ENCODE measurements at regions of chr17 and their contacts with region 1.

Region 1: DNA sequence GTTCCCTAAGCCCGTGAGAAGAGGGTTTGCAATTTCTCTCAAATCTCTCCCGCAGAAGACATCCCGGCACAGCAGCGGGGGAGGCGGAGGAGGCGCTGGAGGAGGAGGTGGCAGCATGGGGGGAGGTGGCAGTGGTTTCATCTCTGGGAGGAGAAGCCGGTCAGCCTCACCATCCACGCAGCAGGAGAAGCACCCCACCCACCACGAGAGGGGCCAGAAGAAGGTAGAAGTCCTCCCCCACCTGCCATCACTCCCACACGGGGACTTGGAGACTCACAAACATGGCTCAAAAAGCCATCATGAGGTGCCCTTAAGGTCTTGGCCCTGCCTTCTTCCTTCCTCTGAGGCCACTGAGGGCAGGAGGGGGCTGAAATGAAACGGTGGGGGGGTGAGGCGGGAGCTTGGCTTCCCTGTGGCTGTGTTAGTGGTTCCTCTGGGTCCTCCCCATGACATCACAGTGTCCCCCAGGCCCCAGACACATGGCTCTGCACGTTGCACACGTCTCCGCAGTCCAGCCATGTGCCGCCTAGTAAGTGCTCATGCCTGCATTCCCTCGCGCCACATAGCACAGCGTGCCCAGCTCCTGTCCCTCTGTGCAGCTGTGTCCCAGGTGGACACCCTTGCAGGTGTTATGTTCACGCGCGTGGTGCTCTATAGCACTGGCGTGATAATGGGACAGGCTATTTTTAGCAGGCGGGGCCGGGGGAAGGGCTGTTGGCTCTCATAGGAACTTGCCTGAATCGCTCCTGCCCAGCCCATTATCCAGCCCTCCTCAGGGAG is 6.9 kb downstream of the MLLT6 start:
- DNase-seq: peak in 1 of 4 experiments; percentile 38
- ATAC-seq: no peak
- H3K4me3 ChIP-seq: no peak overlapping the region
- H3K27ac ChIP-seq: no peak overlapping the region
- H3K4me1 ChIP-seq: peaks cover 30 to 52% of the 10 kb centered on the region in 2 experiments
- H3K27me3 ChIP-seq: no peaks in the 10 kb centered on the region
- CTCF ChIP-seq: no peak
- EP300 ChIP-seq: no peak
- POLR2A ChIP-seq: no peak
- RAD21 ChIP-seq: no peak

Region 2: GRCh38 chr17:38724337-38724988 is 12.5 kb after region 1 on chr17:
- CTCF ChIA-PET with region 1: no interaction called
- POLR2A ChIA-PET with region 1: interaction called, 30 read pairs
- in situ Hi-C with region 1: no loop called
- intact Hi-C with region 1: no loop called
- DNase-seq: no peak
- ATAC-seq: no peak
- H3K4me3 ChIP-seq: no peak overlapping the region
- H3K27ac ChIP-seq: no peak overlapping the region
- H3K4me1 ChIP-seq: peaks cover 32 to 57% of the 10 kb centered on the region in 2 experiments
- H3K27me3 ChIP-seq: no peaks in the 10 kb centered on the region
- CTCF ChIP-seq: no peak
- EP300 ChIP-seq: no peak
- POLR2A ChIP-seq: no peak
- RAD21 ChIP-seq: no peak

Region 3: GRCh38 chr17:38777641-38778250 is 65.8 kb after region 1 on chr17:
- CTCF ChIA-PET with region 1: no interaction called
- POLR2A ChIA-PET with region 1: no interaction called
- in situ Hi-C with region 1: no loop called
- intact Hi-C with region 1: no loop called
- DNase-seq: no peak
- ATAC-seq: no peak
- H3K4me3 ChIP-seq: no peak overlapping the region
- H3K27ac ChIP-seq: no peak overlapping the region
- H3K4me1 ChIP-seq: no peaks in the 10 kb centered on the region
- H3K27me3 ChIP-seq: no peaks in the 10 kb centered on the region
- CTCF ChIP-seq: no peak
- EP300 ChIP-seq: no peak
- POLR2A ChIP-seq: no peak
- RAD21 ChIP-seq: no peak

Region 4: DNA sequence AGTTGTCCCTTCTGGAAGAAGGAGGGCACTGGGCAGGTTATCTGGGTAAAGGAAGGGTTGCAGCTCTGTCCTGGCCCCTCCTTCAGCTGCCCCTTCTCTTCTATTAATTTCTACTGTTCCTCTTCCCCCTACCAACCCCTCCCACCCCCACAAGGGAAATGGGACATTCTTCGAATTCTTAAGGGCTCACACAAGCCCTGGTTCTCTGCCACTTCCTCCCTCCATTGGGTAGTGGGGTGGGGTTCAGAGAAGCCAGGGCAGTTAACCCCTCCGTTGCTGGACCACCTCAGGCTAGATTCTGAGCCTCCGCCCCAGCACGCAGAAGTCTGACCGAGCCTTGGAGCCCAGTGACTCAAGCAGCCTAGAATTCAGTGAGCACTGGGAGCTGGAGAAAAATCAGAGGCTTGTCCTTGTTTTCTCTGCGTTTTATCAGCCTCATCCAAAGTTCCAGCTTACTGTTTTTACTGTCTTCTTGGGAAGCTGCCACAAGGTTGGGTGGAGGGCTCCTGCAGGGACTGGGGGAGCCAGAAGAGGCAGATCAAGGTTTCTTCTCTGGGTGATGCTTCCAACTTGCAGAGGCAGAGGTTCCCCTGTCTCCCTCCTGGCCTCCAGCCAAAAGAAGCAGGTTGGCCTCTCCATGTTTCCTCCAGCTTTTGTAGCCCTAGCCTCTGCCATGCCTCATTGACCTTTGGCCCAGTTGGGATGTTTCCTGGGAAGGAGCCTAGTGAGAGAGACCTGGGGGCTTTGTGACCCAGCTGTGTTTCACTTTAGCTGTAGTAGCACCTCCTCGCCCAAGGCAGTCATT is 168.1 kb after region 1 on chr17:
- CTCF ChIA-PET with region 1: no interaction called
- POLR2A ChIA-PET with region 1: no interaction called
- in situ Hi-C with region 1: no loop called
- intact Hi-C with region 1: no loop called
- DNase-seq: peak in 1 of 4 experiments; percentile 14
- ATAC-seq: no peak
- H3K4me3 ChIP-seq: no peak overlapping the region
- H3K27ac ChIP-seq: no peak overlapping the region
- H3K4me1 ChIP-seq: peaks cover 9 to 15% of the 10 kb centered on the region in 2 experiments; a peak in 4 of 5 replicates
- H3K27me3 ChIP-seq: no peaks in the 10 kb centered on the region
- CTCF ChIP-seq: no peak
- EP300 ChIP-seq: no peak
- POLR2A ChIP-seq: no peak
- RAD21 ChIP-seq: no peak